Breast epithelium (tissue), 4 donors: ENCODE measurements at regions of chr4 and their contacts with region 1.

Region 1: DNA sequence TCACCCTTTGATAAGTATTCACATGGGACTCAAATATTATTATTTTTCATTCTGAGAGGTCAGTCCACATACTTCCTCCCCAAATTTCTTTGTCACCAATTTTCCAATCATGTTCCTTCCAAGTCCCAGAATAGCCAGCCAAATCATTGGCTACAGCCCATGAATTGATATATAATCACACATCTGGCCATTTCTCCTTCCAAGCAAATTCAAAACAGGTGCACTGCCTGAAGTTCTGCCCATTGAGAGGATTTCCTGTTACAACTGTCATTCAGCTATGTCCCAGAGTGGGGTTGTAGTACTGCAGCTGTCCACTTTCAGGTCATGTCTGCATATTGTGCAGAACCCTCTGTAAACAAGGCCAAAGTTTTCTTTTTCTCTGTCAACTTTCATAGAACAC is 347.8 kb downstream of the GRID2 start:
- DNase-seq: no peak
- H3K4me3 ChIP-seq: no peak overlapping the region
- H3K27ac ChIP-seq: no peak overlapping the region
- H3K4me1 ChIP-seq: no peaks in the 10 kb centered on the region
- H3K27me3 ChIP-seq: no peaks in the 10 kb centered on the region
- CTCF ChIP-seq: no peak
- POLR2A ChIP-seq: no peak

Region 2: DNA sequence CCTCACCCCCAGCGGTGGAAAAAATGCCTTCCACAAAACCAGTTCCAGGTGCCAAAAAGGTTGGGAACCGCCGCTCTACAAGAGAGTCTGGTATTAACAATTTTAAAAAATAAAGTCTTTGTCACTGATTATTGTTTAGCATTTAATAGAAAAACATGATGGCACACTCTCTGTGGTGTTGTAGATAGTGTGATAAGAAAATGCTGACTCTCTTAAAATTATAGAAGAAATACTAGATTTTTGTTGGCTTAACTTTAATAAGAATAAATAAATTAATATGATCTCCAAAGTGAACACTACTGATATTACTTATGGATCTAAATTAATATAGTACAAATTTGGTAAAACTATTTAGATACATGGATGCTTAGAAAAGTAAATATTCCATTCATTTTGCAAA is 1580.8 kb before region 1 on chr4:
- intact Hi-C with region 1: loop called (anchors 10 kb)
- DNase-seq: no peak
- H3K4me3 ChIP-seq: no peak overlapping the region
- H3K27ac ChIP-seq: no peak overlapping the region
- H3K4me1 ChIP-seq: no peaks in the 10 kb centered on the region
- H3K27me3 ChIP-seq: no peaks in the 10 kb centered on the region
- CTCF ChIP-seq: no peak
- POLR2A ChIP-seq: no peak